Caco-2 (cell line): ENCODE measurements at regions of chrX and their contacts with region 1.

Region 1: DNA sequence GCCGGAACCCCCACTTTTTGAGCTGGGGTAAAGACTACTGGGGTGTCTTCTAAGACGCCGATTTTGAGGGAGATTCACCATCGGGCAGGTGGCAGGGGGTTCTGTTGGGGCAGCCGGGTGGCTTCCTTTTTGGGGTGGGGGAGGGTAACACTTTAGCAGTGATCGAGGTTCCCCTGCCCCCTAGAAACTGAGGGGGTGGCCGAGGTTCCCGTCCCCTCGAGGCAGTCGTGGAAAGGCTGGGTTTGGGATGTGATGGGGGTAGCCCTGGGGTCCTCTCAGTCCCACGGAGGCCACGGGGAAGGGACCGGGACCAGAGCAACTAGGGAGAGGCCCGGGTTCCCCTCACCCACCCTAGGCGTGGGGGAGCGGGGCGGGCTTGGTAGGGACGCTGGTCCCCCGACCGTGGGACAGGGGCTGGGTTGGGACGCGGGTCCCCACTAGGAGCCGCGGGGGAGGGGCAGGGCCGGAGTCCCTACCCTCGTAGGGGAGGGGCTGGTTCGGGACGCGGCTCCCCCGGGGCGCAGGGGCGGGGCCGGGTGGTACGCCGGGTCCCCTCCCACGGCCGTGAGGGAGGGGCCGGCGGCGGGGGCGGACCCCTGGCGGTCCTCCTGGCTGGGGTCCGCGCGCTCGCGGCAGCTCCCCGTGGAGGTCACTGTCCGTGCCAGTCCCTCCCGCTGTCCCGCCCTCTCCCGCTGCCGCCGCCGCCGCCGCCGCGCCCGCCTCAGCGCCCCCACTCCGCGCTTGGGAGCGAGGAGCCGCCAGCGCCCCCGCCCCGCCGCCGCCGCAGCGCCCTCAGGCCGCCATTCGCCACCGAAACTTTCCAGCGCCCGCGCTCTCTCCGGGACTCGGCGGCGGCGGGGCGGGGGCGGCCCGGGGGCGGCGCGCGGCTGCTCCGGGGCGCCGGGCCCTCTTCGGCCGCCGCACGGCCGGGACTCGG is at the start of gene TBL1X:
- DNase-seq: peak; percentile 75 to 85
- H3K4me3 ChIP-seq: peak within 1 kb of the TSS; percentile 76
- H3K4me3 Mint-ChIP-seq: peak within 1 kb of the TSS; percentile 91
- H3K27ac Mint-ChIP-seq: peak within 1 kb of the TSS; percentile 94
- H3K4me1 ChIP-seq: peaks cover 6% of the 10 kb centered on the region
- H3K4me1 Mint-ChIP-seq: peaks cover 20% of the 10 kb centered on the region
- H3K27me3 ChIP-seq: no peaks in the 10 kb centered on the region
- H3K27me3 Mint-ChIP-seq: no peaks in the 10 kb centered on the region
- CTCF ChIP-seq: no peak
- total RNA-seq, gene TBL1X: 75.3 and 84.2 TPM in 2 replicates

Region 2: DNA sequence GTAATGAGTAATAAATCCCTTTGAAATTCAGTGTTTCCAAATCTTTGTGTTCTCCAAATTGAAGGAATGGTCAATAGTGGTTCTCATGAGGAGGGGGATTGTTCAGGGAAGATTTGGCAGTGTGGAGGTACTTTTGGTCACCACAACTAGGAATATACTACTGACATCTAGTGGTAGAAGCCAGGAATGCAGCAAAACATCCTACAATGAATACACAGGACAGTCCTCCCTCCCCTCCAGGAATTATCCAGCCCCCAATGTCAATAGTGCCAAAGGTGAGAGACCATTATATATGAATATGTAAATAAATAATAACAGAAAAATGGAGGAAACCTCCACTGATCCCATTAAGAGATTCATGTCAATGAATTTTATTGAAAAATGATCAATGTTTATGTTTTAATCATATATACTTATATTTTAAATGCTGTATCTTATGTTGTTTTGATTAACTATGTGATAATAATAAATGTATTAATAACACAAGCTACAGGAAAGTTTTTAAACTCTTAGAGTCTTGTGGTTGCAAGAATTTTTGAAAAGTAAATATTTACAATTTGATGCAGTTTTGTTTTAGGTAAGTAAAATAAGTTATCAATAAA is 649.1 kb before region 1 on chrX:
- CTCF ChIA-PET with region 1: no interaction called
- POLR2A ChIA-PET with region 1: no interaction called
- intact Hi-C with region 1: loop called (anchors 10 kb)
- DNase-seq: peak in 1 of 2 experiments; percentile 60
- H3K4me3 ChIP-seq: no peak overlapping the region
- H3K4me3 Mint-ChIP-seq: no peak overlapping the region
- H3K27ac Mint-ChIP-seq: no peak overlapping the region
- H3K4me1 ChIP-seq: no peaks in the 10 kb centered on the region
- H3K4me1 Mint-ChIP-seq: no peaks in the 10 kb centered on the region
- H3K27me3 ChIP-seq: no peaks in the 10 kb centered on the region
- H3K27me3 Mint-ChIP-seq: peaks cover under 1% of the 10 kb centered on the region
- CTCF ChIP-seq: peak; percentile 44 to 68

Region 3: GRCh38 chrX:8845060-8845459 is 619.6 kb before region 1 on chrX:
- CTCF ChIA-PET with region 1: no interaction called
- POLR2A ChIA-PET with region 1: no interaction called
- intact Hi-C with region 1: loop called (anchors 10 kb)
- DNase-seq: peak; percentile 77 to 84
- H3K4me3 ChIP-seq: peak overlapping the region; percentile 40
- H3K4me3 Mint-ChIP-seq: peak overlapping the region; percentile 77
- H3K27ac Mint-ChIP-seq: peak overlapping the region; percentile 92
- H3K4me1 ChIP-seq: peaks cover 33% of the 10 kb centered on the region
- H3K4me1 Mint-ChIP-seq: peaks cover 16% of the 10 kb centered on the region
- H3K27me3 ChIP-seq: no peaks in the 10 kb centered on the region
- H3K27me3 Mint-ChIP-seq: no peaks in the 10 kb centered on the region
- CTCF ChIP-seq: peak in 1 of 2 experiments; percentile 47

Region 4: DNA sequence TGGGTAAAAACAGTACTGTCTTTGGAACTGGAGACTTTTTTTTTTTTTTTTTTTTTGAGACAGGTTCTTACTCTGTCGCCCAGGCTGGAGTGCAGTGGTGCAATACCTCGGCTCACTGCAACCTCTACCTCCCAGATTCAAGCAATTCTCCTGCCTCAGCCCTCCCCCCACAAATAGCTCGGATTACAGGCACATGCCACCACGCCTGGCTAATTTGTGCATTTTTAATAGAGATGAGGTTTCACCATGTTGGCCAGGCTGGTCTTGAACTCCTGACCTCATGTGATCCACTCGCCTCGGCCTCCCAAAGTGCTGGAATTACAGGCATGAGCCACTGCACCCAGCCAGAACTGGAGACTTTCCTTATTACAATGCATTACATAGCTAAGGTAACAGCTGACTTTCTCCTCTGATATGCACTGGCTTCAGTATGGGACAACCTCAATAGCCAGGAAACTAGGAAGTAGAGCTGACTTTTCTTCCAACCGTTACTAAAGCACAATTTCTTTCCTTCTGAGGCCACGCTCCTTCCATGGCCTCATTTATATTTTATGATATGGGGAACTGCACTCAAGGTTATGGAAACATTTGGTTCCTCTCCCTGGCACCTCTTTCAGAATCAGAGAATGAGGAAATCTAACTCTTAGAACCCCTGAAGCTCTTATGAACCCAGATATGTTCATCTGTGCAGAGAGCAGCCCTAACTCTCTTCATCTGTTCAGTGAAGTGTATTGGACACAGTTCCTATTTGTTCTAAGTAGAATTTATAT is 377.2 kb before region 1 on chrX:
- CTCF ChIA-PET with region 1: no interaction called
- POLR2A ChIA-PET with region 1: no interaction called
- intact Hi-C with region 1: no loop called
- DNase-seq: no peak
- H3K4me3 ChIP-seq: no peak overlapping the region
- H3K4me3 Mint-ChIP-seq: no peak overlapping the region
- H3K27ac Mint-ChIP-seq: no peak overlapping the region
- H3K4me1 ChIP-seq: no peaks in the 10 kb centered on the region
- H3K4me1 Mint-ChIP-seq: no peaks in the 10 kb centered on the region
- H3K27me3 ChIP-seq: no peaks in the 10 kb centered on the region
- H3K27me3 Mint-ChIP-seq: no peaks in the 10 kb centered on the region
- CTCF ChIP-seq: no peak

Region 5: GRCh38 chrX:9269142-9269541 is 195.6 kb before region 1 on chrX:
- CTCF ChIA-PET with region 1: no interaction called
- POLR2A ChIA-PET with region 1: no interaction called
- intact Hi-C with region 1: loop called (anchors 2 kb)
- DNase-seq: peak; percentile 22 to 30
- H3K4me3 ChIP-seq: no peak overlapping the region
- H3K4me3 Mint-ChIP-seq: no peak overlapping the region
- H3K27ac Mint-ChIP-seq: peak overlapping the region; percentile 21
- H3K4me1 ChIP-seq: no peaks in the 10 kb centered on the region
- H3K4me1 Mint-ChIP-seq: peaks cover 16% of the 10 kb centered on the region
- H3K27me3 ChIP-seq: no peaks in the 10 kb centered on the region
- H3K27me3 Mint-ChIP-seq: no peaks in the 10 kb centered on the region
- CTCF ChIP-seq: no peak

Region 6: DNA sequence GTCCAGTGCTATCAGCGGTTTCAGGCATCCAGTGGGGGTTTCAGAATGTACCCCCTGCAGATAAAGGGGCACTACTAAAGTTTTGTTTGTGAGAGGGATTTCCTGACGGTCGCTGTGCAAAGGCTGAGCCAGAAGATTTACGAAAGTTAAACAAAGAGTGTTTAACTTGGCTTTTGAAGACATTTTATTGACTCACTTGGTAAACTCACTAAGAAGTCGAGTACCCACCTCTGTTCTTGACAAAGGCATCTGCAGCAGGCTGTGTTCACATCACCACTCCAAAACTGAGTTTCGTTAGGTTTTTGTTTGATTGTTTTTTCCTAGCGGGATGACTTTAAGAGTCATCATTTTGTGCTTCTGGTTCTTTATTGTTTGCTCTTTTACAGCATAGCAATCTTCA is 143.8 kb before region 1 on chrX:
- CTCF ChIA-PET with region 1: no interaction called
- POLR2A ChIA-PET with region 1: no interaction called
- intact Hi-C with region 1: loop called (anchors 2 kb)
- DNase-seq: peak; percentile 40 to 55
- H3K4me3 ChIP-seq: no peak overlapping the region
- H3K4me3 Mint-ChIP-seq: no peak overlapping the region
- H3K27ac Mint-ChIP-seq: no peak overlapping the region
- H3K4me1 ChIP-seq: peaks cover 4% of the 10 kb centered on the region; the same call in 1 of the 2 replicates
- H3K4me1 Mint-ChIP-seq: peaks cover 6% of the 10 kb centered on the region
- H3K27me3 ChIP-seq: no peaks in the 10 kb centered on the region
- H3K27me3 Mint-ChIP-seq: no peaks in the 10 kb centered on the region
- CTCF ChIP-seq: no peak

Region 7: DNA sequence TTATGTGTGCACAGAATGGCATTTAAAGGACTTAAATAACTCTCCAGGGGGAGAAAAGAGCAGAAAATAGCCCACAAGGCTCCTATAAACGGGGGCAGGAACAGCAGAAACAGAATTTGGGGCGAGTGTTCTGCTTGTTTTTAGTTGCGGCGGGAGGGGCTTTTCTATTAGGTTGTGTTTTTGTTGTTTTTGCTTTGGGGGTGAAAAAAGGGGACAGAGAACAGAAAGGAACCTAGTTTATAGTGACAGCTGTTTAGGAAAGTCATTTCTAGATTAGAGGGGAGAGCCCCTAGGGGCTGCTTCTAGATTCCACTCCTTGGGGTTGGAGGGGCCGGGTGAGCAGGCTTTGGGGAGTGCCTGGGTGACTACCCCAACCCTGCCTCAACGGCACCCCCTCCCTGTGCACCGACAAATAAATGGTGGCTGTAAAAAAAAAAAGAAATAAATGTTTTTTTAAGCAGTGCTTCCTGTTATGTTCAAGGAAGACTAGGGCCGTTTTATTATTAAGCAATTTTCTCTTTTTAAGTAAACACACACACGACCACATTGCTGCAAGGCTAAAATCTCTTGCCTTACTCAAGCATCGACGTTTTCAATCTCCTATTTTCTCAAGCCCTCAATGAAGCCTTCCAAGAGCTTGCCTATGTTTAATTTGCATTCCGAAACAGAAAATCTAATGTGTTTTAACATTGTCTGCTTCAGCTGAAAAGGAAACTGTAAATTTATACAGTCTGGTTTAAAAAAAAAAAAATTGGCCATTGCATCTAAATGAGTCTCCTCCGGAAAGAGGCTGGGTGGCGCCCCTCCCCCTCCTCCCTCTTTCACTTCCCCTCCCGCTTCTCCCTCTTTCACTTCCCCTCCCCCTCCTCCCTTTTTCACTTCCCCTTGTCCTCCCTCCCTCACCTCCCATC is 123.2 kb before region 1 on chrX:
- CTCF ChIA-PET with region 1: no interaction called
- POLR2A ChIA-PET with region 1: no interaction called
- intact Hi-C with region 1: loop called (anchors 1 kb)
- DNase-seq: no peak
- H3K4me3 ChIP-seq: no peak overlapping the region
- H3K4me3 Mint-ChIP-seq: no peak overlapping the region
- H3K27ac Mint-ChIP-seq: peak overlapping the region; percentile 39
- H3K4me1 ChIP-seq: no peaks in the 10 kb centered on the region
- H3K4me1 Mint-ChIP-seq: no peaks in the 10 kb centered on the region
- H3K27me3 ChIP-seq: no peaks in the 10 kb centered on the region
- H3K27me3 Mint-ChIP-seq: no peaks in the 10 kb centered on the region
- CTCF ChIP-seq: no peak

Region 8: DNA sequence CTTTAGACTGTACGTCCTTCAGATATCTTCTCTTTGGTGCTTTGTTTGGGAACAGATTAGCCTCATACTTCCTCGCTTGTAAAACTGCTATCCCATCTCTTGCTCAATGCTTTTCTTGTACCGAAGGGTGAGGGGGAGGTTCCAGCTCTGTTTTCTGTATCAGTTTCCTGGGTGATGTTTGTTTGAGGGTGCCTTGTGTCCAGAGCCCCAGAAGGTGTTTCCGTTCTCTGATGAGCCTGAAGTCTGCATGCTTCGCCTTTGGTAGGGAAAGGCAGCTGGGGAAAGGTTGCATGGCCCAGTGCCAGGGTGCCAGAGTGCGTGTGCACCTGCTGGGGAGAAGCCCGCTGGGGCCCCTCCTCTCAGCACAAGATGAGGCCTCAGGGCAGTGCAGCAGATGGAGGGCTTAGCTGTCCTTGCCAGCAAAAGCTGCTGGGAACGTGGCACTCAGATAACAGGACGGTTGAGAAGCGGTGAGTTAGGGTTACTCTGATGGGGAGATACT is 73.9 kb after region 1 on chrX:
- CTCF ChIA-PET with region 1: no interaction called
- POLR2A ChIA-PET with region 1: no interaction called
- intact Hi-C with region 1: loop called (anchors 2 kb)
- DNase-seq: peak; percentile 35 to 64
- H3K4me3 ChIP-seq: no peak overlapping the region
- H3K4me3 Mint-ChIP-seq: peak overlapping the region; percentile 33
- H3K27ac Mint-ChIP-seq: peak overlapping the region; percentile 86
- H3K4me1 ChIP-seq: 0 out of 2 replicates have a peak, but pooled peaks cover 4% of the 10 kb centered on the region
- H3K4me1 Mint-ChIP-seq: peaks cover 9% of the 10 kb centered on the region
- H3K27me3 ChIP-seq: no peaks in the 10 kb centered on the region
- H3K27me3 Mint-ChIP-seq: no peaks in the 10 kb centered on the region
- CTCF ChIP-seq: no peak

Region 9: DNA sequence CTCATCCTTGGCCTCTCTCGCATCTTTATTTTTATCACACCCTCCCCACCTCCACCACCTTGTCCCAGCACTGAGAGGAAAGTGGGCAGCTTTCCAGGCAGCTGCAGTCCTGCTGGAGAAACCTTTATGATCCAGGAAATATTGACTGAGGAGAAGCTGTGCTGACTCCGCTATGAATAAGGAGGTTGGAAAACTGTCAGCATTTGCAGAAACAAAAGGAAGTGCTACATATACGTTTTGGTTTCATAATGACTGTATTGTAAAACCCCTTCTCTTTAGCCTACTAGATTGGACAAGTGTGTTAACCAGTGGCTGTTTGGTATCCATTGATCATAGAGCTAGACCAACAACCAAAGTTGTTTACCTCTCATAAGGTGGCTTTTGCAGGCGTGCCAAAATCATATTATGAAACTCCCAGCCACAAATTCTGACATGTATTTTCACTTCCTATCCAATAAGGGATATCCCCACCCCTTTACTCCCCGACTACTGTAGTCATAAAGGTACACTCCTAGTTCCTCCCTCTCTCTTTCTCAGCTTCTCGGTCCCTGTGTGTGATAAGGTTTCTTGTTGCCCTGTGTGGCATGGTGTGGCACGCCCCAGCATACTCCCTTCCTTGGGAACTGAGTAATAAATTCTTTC is 212.5 kb after region 1 on chrX:
- CTCF ChIA-PET with region 1: no interaction called
- POLR2A ChIA-PET with region 1: no interaction called
- intact Hi-C with region 1: no loop called
- DNase-seq: no peak
- H3K4me3 ChIP-seq: no peak overlapping the region
- H3K4me3 Mint-ChIP-seq: no peak overlapping the region
- H3K27ac Mint-ChIP-seq: no peak overlapping the region
- H3K4me1 ChIP-seq: no peaks in the 10 kb centered on the region
- H3K4me1 Mint-ChIP-seq: peaks cover 6% of the 10 kb centered on the region
- H3K27me3 ChIP-seq: no peaks in the 10 kb centered on the region
- H3K27me3 Mint-ChIP-seq: no peaks in the 10 kb centered on the region
- CTCF ChIP-seq: no peak